CD8-positive, alpha-beta memory T cell (primary cell): ENCODE measurements at regions of chr15 and their contacts with region 1.

Region 1: DNA sequence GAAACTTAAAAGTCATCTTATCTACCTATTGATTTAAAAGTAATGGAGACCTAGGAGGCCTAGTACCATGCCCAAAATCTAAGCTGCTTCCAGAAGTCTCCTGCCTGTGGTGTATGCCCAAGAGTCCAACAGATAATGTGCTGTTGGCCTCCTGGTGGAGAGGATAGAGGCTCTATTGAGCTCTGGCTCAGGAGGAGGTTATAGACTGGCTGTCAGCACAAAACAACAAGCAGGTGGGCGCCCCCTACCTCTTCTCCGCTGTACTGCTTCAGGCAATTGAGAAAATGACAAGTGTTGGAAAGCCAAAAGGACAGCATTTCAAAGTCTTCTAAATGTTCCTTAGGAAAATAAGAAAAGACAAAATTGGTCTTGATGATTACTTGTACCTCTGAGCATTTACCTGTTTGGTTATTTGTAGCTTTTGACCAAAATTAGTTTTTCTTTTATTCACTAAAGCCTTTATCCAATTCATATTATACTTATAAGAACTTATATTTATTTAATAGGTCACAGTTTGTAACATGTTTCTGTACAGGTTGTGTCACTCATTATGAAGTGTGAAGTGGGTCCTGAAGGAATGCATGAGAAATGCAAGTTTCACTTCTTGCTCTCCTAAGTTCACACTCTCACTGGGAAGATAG is 17.2 kb upstream of the GNB5 start:
- DNase-seq: peak; percentile 62 to 82 (median 63)
- H3K4me3 ChIP-seq: no peak overlapping the region
- H3K4me3 Mint-ChIP-seq: no peak overlapping the region
- H3K27ac ChIP-seq: no peak overlapping the region
- H3K27ac Mint-ChIP-seq: peak overlapping the region in 4 of 8 donors; percentile 18 to 66 (median 22)
- H3K4me1 ChIP-seq: no peaks in the 10 kb centered on the region
- H3K4me1 Mint-ChIP-seq: no peaks in the 10 kb centered on the region
- H3K27me3 ChIP-seq: no peaks in the 10 kb centered on the region
- H3K27me3 Mint-ChIP-seq: no peaks in the 10 kb centered on the region

Region 2: GRCh38 chr15:52078876-52079700 is 129.3 kb before region 1 on chr15:
- CTCF ChIA-PET with region 1: interaction called, 13 read pairs
- POLR2A ChIA-PET with region 1: no interaction called
- DNase-seq: peak; percentile 64 to 86 (median 71)
- H3K4me3 ChIP-seq: no peak overlapping the region
- H3K4me3 Mint-ChIP-seq: peak overlapping the region in 1 of 7 donors; percentile 59
- H3K27ac ChIP-seq: no peak overlapping the region
- H3K27ac Mint-ChIP-seq: peak overlapping the region in 1 of 8 donors; percentile 2
- H3K4me1 ChIP-seq: peaks cover 11% of the 10 kb centered on the region
- H3K4me1 Mint-ChIP-seq: peaks cover 16 to 24% (median 20%) of the 10 kb centered on the region in 3 donors
- H3K27me3 ChIP-seq: no peaks in the 10 kb centered on the region
- H3K27me3 Mint-ChIP-seq: no peaks in the 10 kb centered on the region

Region 3: DNA sequence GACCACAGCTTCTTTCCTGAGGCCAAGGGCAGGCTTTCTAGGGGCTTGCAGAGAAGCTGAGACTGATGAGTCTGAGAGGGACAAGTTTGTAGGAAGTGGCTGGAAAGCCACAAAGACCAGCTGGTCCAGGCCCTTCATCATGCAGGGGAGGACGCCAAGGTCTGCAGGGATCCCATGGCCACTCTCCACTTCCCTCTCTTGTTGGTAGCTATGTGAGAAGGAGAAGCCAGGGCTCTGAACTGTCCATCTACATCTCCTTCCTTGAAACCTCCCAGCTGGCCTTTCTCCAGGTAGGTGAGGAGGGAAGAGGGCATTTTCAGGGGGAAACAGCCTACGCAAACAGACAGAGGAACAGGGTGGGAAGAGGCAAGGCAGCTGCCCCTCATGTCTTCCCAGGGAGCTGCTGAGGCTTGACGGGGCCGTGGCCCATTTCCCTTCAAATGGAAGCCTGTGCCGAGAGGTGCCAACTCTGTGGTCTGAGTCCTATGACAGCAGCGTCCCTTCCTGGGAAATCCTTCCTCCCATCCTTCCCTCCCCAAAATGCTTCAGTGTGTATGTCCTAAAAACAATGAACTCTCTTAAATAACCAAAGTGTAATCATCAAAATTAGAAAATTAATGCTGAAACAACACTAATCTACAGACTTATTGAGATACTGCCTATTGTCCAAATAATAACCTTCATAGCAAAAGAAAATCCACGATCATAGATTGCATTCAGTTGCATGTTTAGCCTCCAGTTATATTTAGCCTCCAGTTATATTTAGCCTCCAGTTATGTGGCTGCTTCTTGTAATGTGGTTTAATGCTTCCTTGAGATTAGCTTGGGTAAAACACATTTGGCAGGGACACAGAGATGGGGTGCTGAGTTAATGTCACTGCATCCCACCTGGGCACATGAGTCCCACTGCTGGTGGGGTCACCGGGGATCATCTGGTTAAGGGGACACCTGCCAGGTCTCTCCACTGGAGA is 53.2 kb before region 1 on chr15:
- CTCF ChIA-PET with region 1: interaction called, 10 read pairs
- POLR2A ChIA-PET with region 1: no interaction called
- DNase-seq: no peak
- H3K4me3 ChIP-seq: no peak overlapping the region
- H3K4me3 Mint-ChIP-seq: no peak overlapping the region
- H3K27ac ChIP-seq: no peak overlapping the region
- H3K27ac Mint-ChIP-seq: peak overlapping the region in 1 of 8 donors; percentile 66
- H3K4me1 ChIP-seq: no peaks in the 10 kb centered on the region
- H3K4me1 Mint-ChIP-seq: peaks cover 6 to 13% (median 11%) of the 10 kb centered on the region in 3 donors
- H3K27me3 ChIP-seq: no peaks in the 10 kb centered on the region
- H3K27me3 Mint-ChIP-seq: no peaks in the 10 kb centered on the region

Region 4: GRCh38 chr15:52163321-52164190 is 44.9 kb before region 1 on chr15:
- CTCF ChIA-PET with region 1: interaction called, 16 read pairs
- POLR2A ChIA-PET with region 1: interaction called, 17 read pairs
- DNase-seq: peak in 1 of 5 donors; percentile 21
- H3K4me3 ChIP-seq: no peak overlapping the region
- H3K4me3 Mint-ChIP-seq: no peak overlapping the region
- H3K27ac ChIP-seq: no peak overlapping the region
- H3K27ac Mint-ChIP-seq: no peak overlapping the region
- H3K4me1 ChIP-seq: peaks cover 7% of the 10 kb centered on the region
- H3K4me1 Mint-ChIP-seq: peaks cover 35 to 49% (median 45%) of the 10 kb centered on the region in 3 donors
- H3K27me3 ChIP-seq: no peaks in the 10 kb centered on the region
- H3K27me3 Mint-ChIP-seq: no peaks in the 10 kb centered on the region

Region 5: GRCh38 chr15:52179278-52180195 is 28.9 kb before region 1 on chr15:
- CTCF ChIA-PET with region 1: interaction called, 24 read pairs
- POLR2A ChIA-PET with region 1: interaction called, 5 read pairs
- DNase-seq: peak; percentile 78 to 92 (median 88)
- H3K4me3 ChIP-seq: peak overlapping the region; percentile 66
- H3K4me3 Mint-ChIP-seq: peak overlapping the region; percentile 91 to 98 (median 92)
- H3K27ac ChIP-seq: peak overlapping the region; percentile 99
- H3K27ac Mint-ChIP-seq: peak overlapping the region; percentile 91 to 100 (median 98)
- H3K4me1 ChIP-seq: peaks cover 20% of the 10 kb centered on the region
- H3K4me1 Mint-ChIP-seq: peaks cover 33 to 54% (median 43%) of the 10 kb centered on the region in 3 donors
- H3K27me3 ChIP-seq: no peaks in the 10 kb centered on the region
- H3K27me3 Mint-ChIP-seq: no peaks in the 10 kb centered on the region

Region 6: DNA sequence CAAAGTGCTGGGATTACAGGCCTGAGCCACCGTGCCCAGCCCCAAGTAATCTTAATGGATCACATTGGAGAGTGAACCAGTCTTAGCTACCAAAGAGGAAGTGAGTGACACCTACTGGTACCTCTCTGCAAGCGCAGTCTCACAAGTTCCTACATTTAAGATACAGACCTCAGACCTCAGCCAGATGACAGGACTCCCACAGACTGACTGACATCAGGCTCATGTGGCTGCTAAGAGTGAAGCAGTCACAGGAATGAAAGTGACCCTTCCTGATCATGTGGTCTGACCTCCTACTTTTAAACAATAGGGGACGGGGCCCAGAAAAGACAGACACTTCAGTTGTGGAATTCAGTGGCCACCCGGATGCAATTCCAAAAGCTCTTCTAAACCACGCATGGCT is 19.0 kb after region 1 on chr15:
- CTCF ChIA-PET with region 1: interaction called, 13 read pairs
- POLR2A ChIA-PET with region 1: no interaction called
- DNase-seq: peak; percentile 41 to 79 (median 59)
- H3K4me3 ChIP-seq: no peak overlapping the region
- H3K4me3 Mint-ChIP-seq: no peak overlapping the region
- H3K27ac ChIP-seq: no peak overlapping the region
- H3K27ac Mint-ChIP-seq: peak overlapping the region in 2 of 8 donors; percentile 13 to 55
- H3K4me1 ChIP-seq: peaks cover 3% of the 10 kb centered on the region
- H3K4me1 Mint-ChIP-seq: peaks cover 4 to 19% (median 16%) of the 10 kb centered on the region in 3 donors
- H3K27me3 ChIP-seq: no peaks in the 10 kb centered on the region
- H3K27me3 Mint-ChIP-seq: no peaks in the 10 kb centered on the region